Dorsolateral prefrontal cortex (tissue), 120 donors: ENCODE measurements at regions of chr1 and their contacts with region 1.

Region 1: DNA sequence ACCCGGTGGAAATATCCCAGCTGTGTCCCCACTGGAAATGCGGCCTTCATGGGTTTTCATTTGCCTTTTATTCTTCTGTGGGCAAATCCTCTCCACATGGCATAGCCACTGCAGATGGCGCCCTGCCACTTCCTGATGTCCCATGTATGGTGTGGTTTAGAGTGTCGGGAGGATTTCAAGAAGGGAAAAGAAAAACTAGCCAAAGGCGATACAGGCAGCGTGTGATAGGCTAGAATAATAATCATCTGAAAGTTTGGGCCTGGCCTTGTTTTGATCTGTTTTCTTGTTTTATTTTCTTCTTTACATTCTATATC is 123.6 kb downstream of the PEX14 start:
- DNase-seq: peak in 6 of 10 donors; percentile 36 to 69 (median 54)
- H3K4me3 ChIP-seq: no peak overlapping the region
- H3K27ac ChIP-seq: no peak overlapping the region
- H3K27me3 ChIP-seq: no peaks in the 10 kb centered on the region
- CTCF ChIP-seq: peak in 33 of 56 donors; percentile 10 to 63 (median 38)

Region 2: GRCh38 chr1:10267319-10267718 is 331.0 kb before region 1 on chr1:
- intact Hi-C with region 1: no loop called
- DNase-seq: peak in 1 of 10 donors; percentile 48
- H3K4me3 ChIP-seq: no peak overlapping the region
- H3K27ac ChIP-seq: peak overlapping the region in 30 of 59 donors; percentile 2 to 64 (median 30)
- H3K27me3 ChIP-seq: no peaks in the 10 kb centered on the region
- CTCF ChIP-seq: no peak

Region 3: GRCh38 chr1:10788592-10789006 is 190.3 kb after region 1 on chr1:
- intact Hi-C with region 1: loop called in 1 of 2 experiments (anchors 5 kb)
- DNase-seq: peak; percentile 35 to 84 (median 72)
- H3K4me3 ChIP-seq: peak overlapping the region in 1 of 59 donors; percentile 14
- H3K27ac ChIP-seq: peak overlapping the region in 5 of 59 donors; percentile 5 to 55 (median 48)
- H3K27me3 ChIP-seq: peaks cover 0 to 99% (median 73%) of the 10 kb centered on the region in 45 donors
- CTCF ChIP-seq: peak in 53 of 56 donors; percentile 9 to 74 (median 52)

Region 4: DNA sequence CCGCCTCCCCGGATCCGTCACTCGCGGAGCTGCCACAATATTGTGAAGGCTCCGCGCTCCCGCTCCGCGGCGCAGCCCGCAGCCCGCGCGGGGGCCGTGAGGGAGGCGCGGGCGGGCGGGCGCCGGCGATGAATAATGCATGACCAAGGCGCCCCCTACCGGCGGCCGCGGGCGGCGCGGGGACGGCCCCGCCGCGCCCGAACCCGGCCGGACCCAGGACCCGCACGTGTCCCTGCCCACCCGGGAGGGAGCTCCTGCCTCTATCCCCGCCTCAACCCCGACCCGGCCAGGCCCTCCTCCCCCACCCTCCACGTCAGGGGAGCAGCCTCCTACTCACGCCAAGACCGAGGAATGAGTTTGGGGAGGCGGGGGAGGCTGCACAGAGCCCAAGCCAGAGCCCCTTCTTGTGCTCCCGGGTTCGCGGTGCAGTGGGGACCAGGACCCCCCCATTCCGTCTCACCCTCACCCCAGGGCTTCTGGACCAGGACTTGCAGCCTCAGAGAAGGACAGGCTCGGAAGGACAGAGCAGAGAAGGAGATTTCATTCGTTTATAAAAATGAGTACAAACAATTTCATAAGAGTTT is 268.9 kb after region 1 on chr1:
- intact Hi-C with region 1: loop called in 1 of 2 experiments (anchors 10 kb)
- DNase-seq: peak in 8 of 10 donors; percentile 31 to 73 (median 48)
- H3K4me3 ChIP-seq: peak overlapping the region; percentile 22 to 66 (median 48)
- H3K27ac ChIP-seq: peak overlapping the region in 1 of 59 donors; percentile 18
- H3K27me3 ChIP-seq: peaks cover 0 to 14% (median 0%) of the 10 kb centered on the region in 45 donors
- CTCF ChIP-seq: peak in 55 of 56 donors; percentile 14 to 96 (median 73)